WTC11 (cell line): ENCODE measurements at regions of chr12 and their contacts with region 1.

Region 1: DNA sequence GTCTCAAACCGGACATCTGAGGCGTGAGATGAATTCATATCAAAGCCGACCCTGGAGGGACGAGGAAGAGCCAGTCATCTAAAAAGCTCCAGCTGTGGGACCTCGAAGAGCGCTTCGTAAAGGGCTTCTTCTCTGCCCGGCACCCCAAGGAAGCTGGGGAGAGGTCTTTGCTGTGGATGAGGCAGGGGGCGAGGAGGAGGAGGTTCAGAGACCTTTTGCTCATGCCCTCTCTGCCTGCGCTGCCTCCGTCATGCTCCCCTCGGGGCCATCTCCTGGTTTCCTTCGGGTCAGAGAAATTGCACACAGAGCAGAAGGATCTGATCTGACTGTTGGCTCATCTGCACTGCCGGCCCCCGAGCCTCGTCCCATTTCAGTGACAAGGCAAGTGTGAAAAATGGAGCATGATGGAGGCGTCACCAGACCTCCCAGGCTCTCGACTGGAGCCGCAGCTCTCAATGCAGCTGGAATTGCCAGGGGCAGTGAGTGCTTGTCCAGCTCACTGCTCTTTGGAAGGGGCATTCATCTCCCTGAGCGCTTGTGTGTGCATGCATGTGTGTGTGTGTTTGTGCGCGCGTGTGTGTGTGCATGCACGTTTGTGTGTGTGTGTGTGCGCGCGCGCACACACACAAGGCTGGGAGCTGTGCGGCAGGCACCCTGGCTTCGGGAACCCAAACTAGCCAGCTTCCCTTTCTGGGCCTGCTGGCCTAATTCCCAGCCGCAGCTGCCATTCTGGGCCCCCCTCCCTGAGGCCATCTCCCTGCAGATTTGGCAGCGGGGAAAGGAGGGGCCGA is 9.2 kb downstream of the CABP1 start:
- DNase-seq: peak; percentile 28
- ATAC-seq: peak; percentile 11
- H3K4me3 Mint-ChIP-seq: peak overlapping the region; percentile 69
- H3K27ac Mint-ChIP-seq: peak overlapping the region; percentile 64; the same call in 1 of the 2 replicates
- H3K4me1 Mint-ChIP-seq: peaks cover 43% of the 10 kb centered on the region
- H3K27me3 Mint-ChIP-seq: no peaks in the 10 kb centered on the region; the same call in 1 of the 2 replicates
- CTCF ChIP-seq: no peak; the same call in 1 of the 2 replicates

Region 2: GRCh38 chr12:120314220-120314619 is 335.4 kb before region 1 on chr12:
- CTCF ChIA-PET with region 1: no interaction called
- POLR2A ChIA-PET with region 1: no interaction called
- DNase-seq: peak; percentile 47
- ATAC-seq: peak; percentile 22
- H3K4me3 Mint-ChIP-seq: no peak overlapping the region
- H3K27ac Mint-ChIP-seq: peak overlapping the region; percentile 41; the same call in 1 of the 2 replicates
- H3K4me1 Mint-ChIP-seq: peaks cover 11% of the 10 kb centered on the region
- H3K27me3 Mint-ChIP-seq: no peaks in the 10 kb centered on the region
- CTCF ChIP-seq: peak; percentile 39; the same call in 1 of the 2 replicates

Region 3: DNA sequence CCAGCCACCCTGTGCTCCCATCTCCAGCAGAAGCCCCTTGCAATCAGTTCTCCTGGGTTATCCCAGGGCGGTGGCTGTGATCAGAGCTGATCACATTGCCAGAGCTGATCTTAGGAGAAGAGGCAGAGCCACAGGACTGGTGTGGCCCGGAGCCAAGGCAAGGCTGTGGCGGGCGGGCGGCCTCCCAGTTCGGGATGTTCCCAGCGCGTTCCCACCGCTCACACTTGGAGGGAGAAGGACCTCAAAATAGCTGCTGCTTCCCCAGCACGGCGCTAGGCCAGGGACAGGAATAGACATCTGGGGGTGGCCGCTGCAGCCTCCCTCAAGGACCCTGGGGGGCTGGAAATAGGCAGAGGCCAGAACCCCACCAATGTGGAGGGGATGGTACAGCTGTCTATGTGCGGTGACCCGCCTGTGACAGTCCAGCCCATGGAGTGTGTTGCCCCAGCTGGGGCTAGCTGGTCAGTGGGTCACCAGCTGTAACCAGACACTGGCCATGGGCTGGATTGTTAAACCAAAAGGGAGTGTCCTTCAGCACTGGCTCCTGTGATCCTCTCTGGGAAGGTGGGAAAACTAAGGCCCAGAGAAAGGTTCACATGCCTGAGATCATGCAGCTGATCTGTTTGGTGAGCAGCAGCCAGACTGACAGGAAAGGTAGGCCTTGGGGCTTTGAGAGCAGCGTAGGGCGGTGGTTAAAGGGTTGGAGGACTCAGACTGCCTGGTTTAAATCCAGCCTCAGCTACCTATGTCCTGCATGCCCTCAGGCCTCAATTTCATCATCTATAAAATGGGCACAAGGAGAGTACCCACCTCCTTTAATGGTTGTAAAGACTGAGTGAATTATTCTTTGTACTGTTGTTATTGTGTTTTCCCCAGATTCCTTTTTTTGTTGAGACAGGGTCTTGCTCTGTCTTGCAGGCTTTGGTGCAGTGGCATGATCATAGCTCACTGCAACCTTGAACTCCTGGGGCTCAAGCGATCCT is 60.4 kb before region 1 on chr12:
- CTCF ChIA-PET with region 1: interaction called, 115 read pairs
- POLR2A ChIA-PET with region 1: no interaction called
- DNase-seq: no peak
- ATAC-seq: no peak
- H3K4me3 Mint-ChIP-seq: no peak overlapping the region
- H3K27ac Mint-ChIP-seq: peak overlapping the region; percentile 68; the same call in 1 of the 2 replicates
- H3K4me1 Mint-ChIP-seq: peaks cover 7% of the 10 kb centered on the region
- H3K27me3 Mint-ChIP-seq: peaks cover 7% of the 10 kb centered on the region
- CTCF ChIP-seq: no peak

Region 4: GRCh38 chr12:120625557-120626419 is 23.8 kb before region 1 on chr12:
- CTCF ChIA-PET with region 1: interaction called, 79 read pairs
- POLR2A ChIA-PET with region 1: no interaction called
- DNase-seq: peak; percentile 69
- ATAC-seq: peak; percentile 54
- H3K4me3 Mint-ChIP-seq: no peak overlapping the region
- H3K27ac Mint-ChIP-seq: no peak overlapping the region
- H3K4me1 Mint-ChIP-seq: peaks cover 6% of the 10 kb centered on the region
- H3K27me3 Mint-ChIP-seq: no peaks in the 10 kb centered on the region
- CTCF ChIP-seq: no peak

Region 5: DNA sequence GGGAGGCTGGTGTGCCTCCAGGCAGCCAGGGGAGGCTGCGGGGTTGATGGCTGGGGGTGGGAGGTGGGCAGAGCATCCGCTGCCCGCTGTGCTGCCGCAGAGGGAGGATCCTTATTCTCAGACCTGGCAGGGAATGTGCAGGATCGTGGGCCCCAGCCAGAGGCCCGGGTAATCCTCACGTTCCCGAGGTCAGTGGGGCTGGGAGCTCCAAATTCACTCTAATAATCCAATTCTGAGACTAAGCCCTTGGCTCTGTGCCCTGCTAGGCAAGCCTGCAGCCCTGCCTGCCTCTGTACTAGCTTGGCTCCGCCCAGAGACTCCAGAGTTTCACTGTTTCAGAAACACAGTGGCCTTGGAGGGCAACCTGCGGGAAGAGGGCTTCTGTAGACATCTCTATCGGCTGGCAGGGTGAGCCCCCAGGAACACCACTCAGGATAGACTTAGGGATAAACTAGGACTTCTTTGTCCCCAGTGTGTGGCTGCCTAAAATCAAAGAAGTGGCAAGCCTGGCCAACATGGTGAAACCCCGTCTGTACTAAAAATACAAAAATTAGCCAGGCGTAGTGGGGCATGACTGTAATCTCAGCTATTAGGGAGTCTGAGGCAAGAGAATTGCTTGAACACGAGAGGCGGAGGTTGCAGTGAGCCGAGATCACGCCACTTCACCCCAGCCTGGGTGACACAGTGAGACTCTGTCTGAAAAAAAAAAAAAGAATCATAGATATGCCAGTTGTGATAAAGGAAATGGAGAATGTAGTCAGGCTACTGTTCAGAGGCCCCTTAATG is 19.6 kb after region 1 on chr12:
- CTCF ChIA-PET with region 1: interaction called, 78 read pairs
- POLR2A ChIA-PET with region 1: no interaction called
- DNase-seq: peak; percentile 30
- ATAC-seq: peak; percentile 61
- H3K4me3 Mint-ChIP-seq: peak overlapping the region; percentile 19; the same call in 1 of the 2 replicates
- H3K27ac Mint-ChIP-seq: peak overlapping the region; percentile 87
- H3K4me1 Mint-ChIP-seq: peaks cover 38% of the 10 kb centered on the region
- H3K27me3 Mint-ChIP-seq: no peaks in the 10 kb centered on the region
- CTCF ChIP-seq: no peak

Region 6: GRCh38 chr12:120686690-120687577 is 37.3 kb after region 1 on chr12 and contains the start of gene MLEC:
- CTCF ChIA-PET with region 1: interaction called, 24 read pairs
- POLR2A ChIA-PET with region 1: interaction called, 9 read pairs
- DNase-seq: peak; percentile 99
- ATAC-seq: peak; percentile 85
- H3K4me3 Mint-ChIP-seq: peak within 1 kb of the TSS; percentile 87
- H3K27ac Mint-ChIP-seq: peak within 1 kb of the TSS; percentile 96
- H3K4me1 Mint-ChIP-seq: peaks cover 37% of the 10 kb centered on the region
- H3K27me3 Mint-ChIP-seq: no peaks in the 10 kb centered on the region
- CTCF ChIP-seq: no peak
- total RNA-seq, gene MLEC: 221 to 278 TPM (median 253 TPM) in 3 replicates

Region 7: DNA sequence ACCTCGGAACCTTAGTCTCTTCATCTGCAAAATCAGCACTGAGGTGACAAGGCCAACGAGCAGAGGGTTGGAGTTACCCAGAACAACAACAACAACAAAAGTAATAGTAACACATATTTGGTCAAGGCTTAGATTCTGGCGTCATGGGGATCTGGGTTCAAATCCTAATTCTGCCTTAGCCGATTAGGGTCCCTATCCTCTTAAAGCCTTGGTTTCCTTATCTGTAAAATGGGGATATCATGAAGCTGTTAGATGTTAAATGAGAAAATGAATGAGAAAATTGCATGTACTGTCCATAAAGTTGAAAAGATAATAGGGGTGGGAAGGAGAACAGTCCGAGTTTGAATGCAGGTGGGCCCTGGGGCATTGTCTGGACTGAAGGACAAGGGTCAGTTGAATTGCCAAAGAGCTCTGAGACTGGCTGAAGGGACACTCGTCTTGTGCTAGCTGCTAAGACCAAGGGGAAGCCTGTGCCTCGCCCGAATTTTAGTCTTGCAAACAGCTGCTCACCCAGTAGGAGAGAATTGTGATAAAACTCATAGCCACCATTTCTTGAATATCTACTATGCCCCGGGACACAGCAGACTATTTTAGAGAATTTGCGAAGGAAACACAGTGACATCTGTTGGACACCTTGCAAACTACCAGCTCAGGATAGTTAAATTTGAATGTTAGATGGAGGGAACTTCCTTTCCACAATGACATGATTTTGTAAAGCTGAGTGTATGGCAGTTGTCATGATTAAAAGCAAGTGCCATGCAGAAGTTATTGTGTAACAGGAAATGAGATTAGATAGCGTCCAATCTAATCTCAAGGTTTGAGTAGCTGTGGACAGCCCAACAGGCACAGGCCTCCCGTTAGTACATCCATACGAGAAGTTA is 321.9 kb after region 1 on chr12:
- CTCF ChIA-PET with region 1: interaction called, 20 read pairs
- POLR2A ChIA-PET with region 1: no interaction called
- DNase-seq: no peak
- ATAC-seq: peak; percentile 43; the same call in 1 of the 2 replicates
- H3K4me3 Mint-ChIP-seq: no peak overlapping the region
- H3K27ac Mint-ChIP-seq: peak overlapping the region; percentile 88
- H3K4me1 Mint-ChIP-seq: peaks cover 17% of the 10 kb centered on the region
- H3K27me3 Mint-ChIP-seq: no peaks in the 10 kb centered on the region
- CTCF ChIP-seq: peak; percentile 24; the same call in 1 of the 2 replicates